Kidney (tissue), 22 donors: ENCODE measurements at regions of chr10 and their contacts with region 1.

Region 1: GRCh38 chr10:14191871-14192270 is 138.9 kb downstream of the FRMD4A start:
- DNase-seq: no peak
- H3K4me3 ChIP-seq: no peak overlapping the region
- H3K27ac ChIP-seq: no peak overlapping the region
- H3K4me1 ChIP-seq: peaks cover 0 to 7% (median 2%) of the 10 kb centered on the region in 3 donors
- H3K27me3 ChIP-seq: no peaks in the 10 kb centered on the region
- CTCF ChIP-seq: no peak

Region 2: GRCh38 chr10:14486777-14487487 is 295.1 kb after region 1 on chr10:
- intact Hi-C with region 1: loop called (anchors 10 kb)
- DNase-seq: peak in 1 of 5 donors; percentile 14
- H3K4me3 ChIP-seq: no peak overlapping the region
- H3K27ac ChIP-seq: no peak overlapping the region
- H3K4me1 ChIP-seq: no peaks in the 10 kb centered on the region
- H3K27me3 ChIP-seq: no peaks in the 10 kb centered on the region
- CTCF ChIP-seq: no peak